Heart right ventricle (tissue), 16 donors: ENCODE measurements at regions of chr12 and their contacts with region 1.

Region 1: DNA sequence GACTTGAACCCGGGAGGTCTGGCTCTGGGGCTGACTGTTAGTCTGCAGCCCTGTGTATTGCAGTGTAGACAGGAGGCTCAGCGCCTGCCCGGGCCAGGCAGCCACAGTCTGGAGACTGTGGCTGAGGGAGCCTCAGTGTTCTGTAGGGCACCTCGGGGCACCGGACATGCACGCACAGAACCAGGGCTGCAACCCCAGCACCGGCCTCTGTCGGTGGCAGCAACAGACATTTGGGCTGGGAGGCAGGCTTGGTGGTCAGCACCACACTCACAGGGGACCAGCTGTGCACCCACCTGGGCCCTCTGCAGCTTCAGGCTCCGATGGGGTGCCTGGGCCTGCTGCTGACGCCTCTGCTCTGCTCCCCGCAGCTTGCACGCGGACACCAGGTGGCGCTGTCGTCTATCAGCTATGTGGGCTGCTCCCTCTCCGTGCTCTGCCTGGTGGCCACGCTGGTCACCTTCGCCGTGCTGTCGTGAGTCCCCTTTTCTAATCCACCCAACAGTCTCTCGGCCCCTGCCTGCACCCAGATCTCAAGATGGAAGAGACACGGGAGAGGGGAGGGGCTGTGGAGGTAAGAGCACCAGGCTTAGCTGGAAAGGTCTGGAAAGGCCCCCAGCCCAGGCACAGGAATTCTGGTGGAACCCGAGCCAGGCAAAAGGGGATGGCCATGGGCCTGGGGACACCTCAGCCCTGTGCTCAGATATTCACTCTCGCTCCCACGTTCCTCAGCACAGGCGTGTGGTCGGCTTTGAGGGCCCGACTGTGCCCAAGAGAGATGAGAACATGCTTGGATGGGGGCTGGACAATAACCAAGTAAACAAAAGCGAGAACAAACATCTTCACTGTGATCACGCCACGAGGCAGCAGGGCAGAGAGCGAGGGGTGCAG is 151.0 kb downstream of the ADGRD1 start:
- DNase-seq: peak; percentile 87 to 90
- ATAC-seq: peak; percentile 84 to 96 (median 92)
- H3K4me3 ChIP-seq: no peak overlapping the region
- H3K27ac ChIP-seq: peak overlapping the region in 3 of 10 donors; percentile 11 to 48 (median 12)
- H3K4me1 ChIP-seq: peaks cover 0 to 17% (median 12%) of the 10 kb centered on the region in 9 donors
- H3K27me3 ChIP-seq: no peaks in the 10 kb centered on the region
- CTCF ChIP-seq: peak; percentile 74 to 96 (median 93)

Region 2: GRCh38 chr12:131402781-131403396 is 298.2 kb after region 1 on chr12:
- intact Hi-C with region 1: no loop called
- DNase-seq: no peak
- ATAC-seq: peak in 1 of 8 donors; percentile 20
- H3K4me3 ChIP-seq: no peak overlapping the region
- H3K27ac ChIP-seq: no peak overlapping the region
- H3K4me1 ChIP-seq: no peaks in the 10 kb centered on the region
- H3K27me3 ChIP-seq: peaks cover 0 to 18% (median 4%) of the 10 kb centered on the region in 7 donors
- CTCF ChIP-seq: no peak

Region 3: GRCh38 chr12:131454418-131455217 is 349.9 kb after region 1 on chr12:
- intact Hi-C with region 1: loop called in 5 of 10 experiments (anchors 10 kb)
- DNase-seq: peak; percentile 32 to 37
- ATAC-seq: peak in 7 of 8 donors; percentile 67 to 88 (median 79)
- H3K4me3 ChIP-seq: no peak overlapping the region
- H3K27ac ChIP-seq: no peak overlapping the region
- H3K4me1 ChIP-seq: no peaks in the 10 kb centered on the region
- H3K27me3 ChIP-seq: peaks cover 0 to 46% (median 24%) of the 10 kb centered on the region in 7 donors
- CTCF ChIP-seq: peak; percentile 8 to 72 (median 56)

Region 4: DNA sequence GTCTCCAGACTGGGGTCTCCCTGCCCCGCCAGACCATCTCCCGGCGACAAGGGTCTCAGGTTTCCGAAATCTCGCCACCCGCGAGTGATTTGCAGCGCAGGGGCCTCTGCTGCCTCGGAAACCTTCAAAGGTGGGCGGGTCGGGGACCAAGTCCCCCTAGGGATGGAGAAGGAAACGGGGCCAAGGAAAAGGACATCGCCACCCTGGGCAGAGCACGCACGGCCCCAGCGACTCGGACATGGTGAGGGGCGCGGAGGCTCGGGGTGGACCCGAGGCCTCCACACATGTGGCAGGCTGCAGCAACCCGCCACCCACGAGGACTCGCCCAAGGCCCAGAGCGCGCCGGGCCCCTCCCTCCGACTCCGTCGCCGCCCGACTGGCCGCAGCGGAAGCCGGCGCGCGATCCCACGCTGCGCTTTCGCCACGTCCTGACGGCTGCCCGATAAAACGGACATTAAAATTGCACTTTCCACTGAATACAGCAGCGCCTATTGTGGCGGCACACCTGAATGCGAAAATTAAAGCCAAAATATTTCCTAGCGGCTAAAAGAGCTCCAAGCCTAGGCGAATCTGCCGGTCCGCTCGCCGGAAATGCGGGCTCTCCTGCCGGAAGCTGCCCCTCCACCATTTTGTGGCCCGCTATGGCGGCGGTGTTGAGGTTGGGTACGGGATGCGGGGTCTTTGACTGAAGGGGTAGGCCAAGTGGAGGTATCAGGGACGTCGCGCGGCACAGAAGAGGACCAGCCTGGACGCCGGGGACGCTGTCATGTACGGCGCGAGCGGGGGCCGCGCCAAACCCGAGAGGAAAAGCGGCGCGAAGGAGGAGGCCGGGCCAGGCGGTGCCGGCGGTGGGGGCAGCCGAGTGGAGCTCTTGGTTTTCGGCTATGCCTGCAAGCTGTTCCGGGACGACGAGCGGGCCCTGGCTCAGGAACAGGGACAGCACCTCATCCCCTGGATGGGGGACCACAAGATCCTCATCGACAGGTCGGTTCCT is 606.1 kb after region 1 on chr12 and contains the start of gene SFSWAP:
- intact Hi-C with region 1: loop called in 1 of 10 experiments (anchors 10 kb)
- DNase-seq: peak; percentile 74 to 76
- ATAC-seq: peak; percentile 96 to 98 (median 97)
- H3K4me3 ChIP-seq: peak within 1 kb of the TSS; percentile 57 to 100 (median 91)
- H3K27ac ChIP-seq: peak within 1 kb of the TSS; percentile 87 to 100 (median 96)
- H3K4me1 ChIP-seq: peaks cover 2 to 30% (median 23%) of the 10 kb centered on the region in 9 donors
- H3K27me3 ChIP-seq: no peaks in the 10 kb centered on the region
- CTCF ChIP-seq: no peak
- total RNA-seq, gene SFSWAP: 14.8 to 26.8 (median 19.6) TPM